Heart left ventricle (tissue), 16 donors: ENCODE measurements at regions of chr9 and their contacts with region 1.

Region 1: DNA sequence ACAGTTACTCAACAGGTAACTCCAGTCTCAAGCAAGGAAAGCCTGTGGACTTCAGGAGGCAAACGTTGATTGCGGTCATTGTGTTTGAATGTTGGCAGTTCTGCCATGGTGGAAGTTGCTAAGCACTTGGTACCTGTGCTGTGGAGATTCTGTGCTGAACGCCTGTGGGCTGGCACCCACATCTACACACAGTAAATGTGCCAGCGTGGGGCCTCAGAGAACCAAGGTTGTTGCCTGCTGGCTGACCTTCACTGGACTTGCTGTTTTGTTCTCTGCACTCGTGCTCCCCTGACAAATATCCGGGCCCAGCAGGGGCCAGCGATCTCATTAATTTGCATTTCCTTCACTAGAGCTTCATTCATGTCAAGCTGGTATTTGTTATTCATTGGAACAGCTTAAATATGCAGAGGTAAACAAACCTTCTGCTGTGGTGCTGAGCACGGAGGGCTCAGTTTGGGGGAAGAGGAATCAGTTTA is 141.8 kb downstream of the PRKACG start:
- DNase-seq: peak; percentile 59 to 80 (median 69)
- ATAC-seq: peak; percentile 90 to 93 (median 92)
- H3K4me3 ChIP-seq: no peak overlapping the region
- H3K27ac ChIP-seq: peak overlapping the region; percentile 46 to 84 (median 73)
- H3K4me1 ChIP-seq: peaks cover 0 to 46% (median 11%) of the 10 kb centered on the region in 12 donors
- H3K27me3 ChIP-seq: no peaks in the 10 kb centered on the region
- CTCF ChIP-seq: no peak
- POLR2A ChIP-seq: no peak

Region 2: GRCh38 chr9:68802525-68803015 is 69.5 kb before region 1 on chr9:
- intact Hi-C with region 1: no loop called
- DNase-seq: no peak
- ATAC-seq: no peak
- H3K4me3 ChIP-seq: no peak overlapping the region
- H3K27ac ChIP-seq: peak overlapping the region in 2 of 12 donors; percentile 80 to 83
- H3K4me1 ChIP-seq: peaks cover 0 to 37% (median 19%) of the 10 kb centered on the region in 12 donors
- H3K27me3 ChIP-seq: no peaks in the 10 kb centered on the region
- CTCF ChIP-seq: no peak
- POLR2A ChIP-seq: no peak

Region 3: GRCh38 chr9:68905129-68905528 is 33.1 kb after region 1 on chr9:
- intact Hi-C with region 1: loop called in 2 of 10 experiments (anchors 5 kb)
- DNase-seq: no peak
- ATAC-seq: no peak
- H3K4me3 ChIP-seq: no peak overlapping the region
- H3K27ac ChIP-seq: no peak overlapping the region
- H3K4me1 ChIP-seq: peaks cover 0 to 24% (median 0%) of the 10 kb centered on the region in 12 donors
- H3K27me3 ChIP-seq: no peaks in the 10 kb centered on the region
- CTCF ChIP-seq: no peak
- POLR2A ChIP-seq: no peak

Region 4: GRCh38 chr9:68912561-68912960 is 40.5 kb after region 1 on chr9:
- intact Hi-C with region 1: loop called in 2 of 10 experiments (anchors 5 kb)
- DNase-seq: no peak
- ATAC-seq: no peak
- H3K4me3 ChIP-seq: no peak overlapping the region
- H3K27ac ChIP-seq: peak overlapping the region in 4 of 12 donors; percentile 1 to 30 (median 25)
- H3K4me1 ChIP-seq: peaks cover 0 to 22% (median 6%) of the 10 kb centered on the region in 12 donors
- H3K27me3 ChIP-seq: no peaks in the 10 kb centered on the region
- CTCF ChIP-seq: no peak
- POLR2A ChIP-seq: no peak

Region 5: GRCh38 chr9:68919661-68920060 is 47.6 kb after region 1 on chr9:
- intact Hi-C with region 1: loop called in 2 of 10 experiments (anchors 5 kb)
- DNase-seq: no peak
- ATAC-seq: no peak
- H3K4me3 ChIP-seq: no peak overlapping the region
- H3K27ac ChIP-seq: no peak overlapping the region
- H3K4me1 ChIP-seq: peaks cover 0 to 9% (median 0%) of the 10 kb centered on the region in 12 donors
- H3K27me3 ChIP-seq: no peaks in the 10 kb centered on the region
- CTCF ChIP-seq: no peak
- POLR2A ChIP-seq: no peak

Region 6: DNA sequence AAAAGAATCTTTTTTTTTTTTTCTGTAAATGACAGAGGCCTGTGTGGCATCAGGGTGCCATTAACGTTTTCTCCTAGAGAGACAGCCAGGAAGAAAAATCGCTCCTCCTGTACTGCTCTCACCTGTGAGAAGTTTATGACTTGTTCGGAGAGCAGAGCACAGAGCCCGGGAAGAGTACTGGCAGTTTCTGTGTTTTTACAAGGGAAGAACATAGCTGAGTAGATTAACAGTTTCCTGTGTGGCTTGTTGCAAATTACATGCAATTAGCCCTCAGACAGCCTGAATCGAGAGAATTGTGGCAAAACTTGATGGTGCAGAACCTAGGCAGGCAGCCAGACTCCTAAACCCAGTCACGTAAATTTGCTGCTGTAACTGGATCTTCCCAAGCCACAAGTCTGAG is 109.7 kb after region 1 on chr9:
- intact Hi-C with region 1: loop called in 1 of 10 experiments (anchors 10 kb)
- DNase-seq: no peak
- ATAC-seq: no peak
- H3K4me3 ChIP-seq: no peak overlapping the region
- H3K27ac ChIP-seq: peak overlapping the region; percentile 16 to 92 (median 80)
- H3K4me1 ChIP-seq: peaks cover 0 to 63% (median 38%) of the 10 kb centered on the region in 12 donors
- H3K27me3 ChIP-seq: no peaks in the 10 kb centered on the region
- CTCF ChIP-seq: no peak
- POLR2A ChIP-seq: no peak

Region 7: GRCh38 chr9:69012696-69013381 is 140.8 kb after region 1 on chr9:
- intact Hi-C with region 1: no loop called
- DNase-seq: no peak
- ATAC-seq: no peak
- H3K4me3 ChIP-seq: no peak overlapping the region
- H3K27ac ChIP-seq: no peak overlapping the region
- H3K4me1 ChIP-seq: peaks cover 0 to 7% (median 0%) of the 10 kb centered on the region in 12 donors
- H3K27me3 ChIP-seq: no peaks in the 10 kb centered on the region
- CTCF ChIP-seq: no peak
- POLR2A ChIP-seq: no peak